ENCODE measurements at regions of chr15 and their contacts with region 1.

Region 1: DNA sequence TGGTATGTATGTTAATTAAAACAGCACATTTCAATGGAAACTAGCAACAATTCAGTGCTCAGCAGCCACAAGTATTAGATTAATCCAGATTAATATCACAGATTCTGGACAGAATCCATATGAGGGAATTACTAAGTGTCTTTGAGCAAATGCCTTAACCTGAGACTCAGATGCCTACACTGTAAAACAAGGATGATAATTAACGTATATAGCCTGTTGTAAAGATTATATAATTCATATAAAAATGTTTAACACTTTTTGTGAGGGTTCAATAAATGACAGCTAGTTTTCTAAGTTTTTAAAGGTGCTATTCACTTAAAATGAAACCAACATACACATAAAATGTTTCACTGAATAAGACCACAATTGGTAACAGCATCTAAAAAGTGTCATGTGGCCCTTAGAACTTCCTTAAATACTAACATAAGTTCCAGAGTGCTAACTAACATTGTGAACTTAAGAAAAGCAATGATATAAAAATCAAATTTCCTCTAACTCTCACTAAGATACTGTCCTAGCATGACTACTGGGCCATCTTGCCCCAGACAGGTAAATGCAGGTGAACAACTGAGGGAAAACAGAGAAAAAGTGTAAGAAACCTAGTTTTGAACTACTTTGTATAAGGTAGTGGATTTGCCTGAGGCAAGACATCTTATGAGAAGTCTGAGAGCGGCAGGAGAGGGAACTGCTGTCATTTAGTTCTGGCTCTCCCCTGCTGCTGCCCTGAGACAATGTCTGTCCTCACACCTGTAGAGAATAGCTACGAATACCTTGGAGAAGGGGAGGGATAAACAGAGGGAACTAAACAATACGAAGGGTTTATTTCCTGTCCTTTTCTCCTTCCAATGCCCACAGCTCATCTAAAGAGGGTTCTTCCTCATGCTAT is 151.3 kb downstream of the ADAM10 start:
- DNase-seq: no peak
- ATAC-seq: no peak
- H3K4me3 ChIP-seq: no peak overlapping the region
- H3K27ac ChIP-seq: no peak overlapping the region
- H3K4me1 ChIP-seq: no peaks in the 10 kb centered on the region
- H3K27me3 ChIP-seq: no peaks in the 10 kb centered on the region
- CTCF ChIP-seq: no peak

Region 2: GRCh38 chr15:58423831-58424608 is 174.2 kb before region 1 on chr15:
- CTCF ChIA-PET with region 1: no interaction called
- POLR2A ChIA-PET with region 1: no interaction called
- intact Hi-C with region 1: no loop called
- DNase-seq: no peak
- ATAC-seq: no peak
- H3K4me3 ChIP-seq: no peak overlapping the region
- H3K27ac ChIP-seq: no peak overlapping the region
- H3K4me1 ChIP-seq: no peaks in the 10 kb centered on the region
- H3K27me3 ChIP-seq: no peaks in the 10 kb centered on the region
- CTCF ChIP-seq: no peak

Region 3: DNA sequence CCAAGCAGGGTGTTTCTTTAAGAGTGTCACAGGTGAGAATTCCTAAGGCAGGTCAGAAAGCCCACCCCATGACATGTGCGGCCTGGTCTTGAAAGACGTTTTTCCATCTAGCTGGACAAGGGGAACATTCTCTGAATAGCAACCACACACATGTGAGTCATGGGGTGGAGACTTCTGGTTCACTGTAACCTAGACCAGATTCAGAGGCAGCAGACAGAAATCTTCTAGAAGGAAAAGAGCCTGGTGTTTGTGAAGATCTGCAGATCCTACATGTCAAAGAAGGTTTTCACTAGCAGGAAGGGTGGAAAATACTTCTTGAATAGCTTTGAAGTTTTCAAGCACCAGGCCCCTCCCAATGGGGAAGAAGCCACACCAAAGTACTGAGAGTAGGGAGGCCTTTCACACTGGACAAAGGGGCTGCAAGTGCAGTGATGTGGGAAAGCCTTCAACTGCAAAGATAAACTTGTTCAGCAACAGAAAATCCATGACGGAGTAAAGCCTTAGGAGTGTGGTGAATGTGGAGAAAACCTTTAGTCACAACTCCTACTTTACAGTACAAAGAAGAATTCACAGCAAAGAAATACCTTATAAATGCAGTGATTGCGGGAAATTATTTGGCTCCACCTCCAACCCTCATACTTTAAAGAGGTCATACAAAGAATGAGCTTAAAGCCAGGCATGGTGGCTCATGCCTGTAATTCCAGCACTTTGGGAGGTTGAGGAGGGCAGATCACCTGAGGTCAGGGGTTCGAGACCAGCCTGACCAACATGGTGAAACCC is 133.8 kb after region 1 on chr15:
- CTCF ChIA-PET with region 1: no interaction called
- POLR2A ChIA-PET with region 1: no interaction called
- intact Hi-C with region 1: loop called (anchors 5 kb)
- DNase-seq: peak; percentile 58
- ATAC-seq: peak; percentile 70; the same call in 1 of the 2 replicates
- H3K4me3 ChIP-seq: no peak overlapping the region
- H3K27ac ChIP-seq: peak overlapping the region; percentile 31
- H3K4me1 ChIP-seq: peaks cover 7% of the 10 kb centered on the region; the same call in 1 of the 2 replicates
- H3K27me3 ChIP-seq: no peaks in the 10 kb centered on the region
- CTCF ChIP-seq: no peak

Measured in PC-3 (cell line).